ENCODE measurements at regions of chr11 and their contacts with region 1.

Region 1: GRCh38 chr11:6603287-6604080 is at the starts of genes ILK and RRP8:
- DNase-seq: peak; percentile 60
- H3K4me3 ChIP-seq: peak within 1 kb of the TSS; percentile 81 to 92 (median 86)
- H3K27ac ChIP-seq: peak within 1 kb of the TSS; percentile 90 to 99 (median 96)
- H3K4me1 ChIP-seq: peaks cover 22 to 76% (median 55%) of the 10 kb centered on the region in 3 donors
- H3K27me3 ChIP-seq: no peaks in the 10 kb centered on the region
- CTCF ChIP-seq: peak in 4 of 6 experiments; percentile 8 to 65 (median 20)
- POLR2A ChIP-seq: peak in 2 of 4 donors; percentile 78 to 82
- total RNA-seq, gene ILK: 34.5 to 128 (median 49.5) TPM
- total RNA-seq, gene RRP8: 10.9 to 23.5 (median 15.7) TPM

Region 2: GRCh38 chr11:6438979-6439571 is 164.4 kb before region 1 on chr11:
- intact Hi-C with region 1: no loop called
- DNase-seq: no peak
- H3K4me3 ChIP-seq: no peak overlapping the region
- H3K27ac ChIP-seq: no peak overlapping the region
- H3K4me1 ChIP-seq: peaks cover 0 to 3% (median 0%) of the 10 kb centered on the region in 3 donors
- H3K27me3 ChIP-seq: no peaks in the 10 kb centered on the region
- CTCF ChIP-seq: peak; percentile 17 to 73 (median 56)
- POLR2A ChIP-seq: no peak

Region 3: DNA sequence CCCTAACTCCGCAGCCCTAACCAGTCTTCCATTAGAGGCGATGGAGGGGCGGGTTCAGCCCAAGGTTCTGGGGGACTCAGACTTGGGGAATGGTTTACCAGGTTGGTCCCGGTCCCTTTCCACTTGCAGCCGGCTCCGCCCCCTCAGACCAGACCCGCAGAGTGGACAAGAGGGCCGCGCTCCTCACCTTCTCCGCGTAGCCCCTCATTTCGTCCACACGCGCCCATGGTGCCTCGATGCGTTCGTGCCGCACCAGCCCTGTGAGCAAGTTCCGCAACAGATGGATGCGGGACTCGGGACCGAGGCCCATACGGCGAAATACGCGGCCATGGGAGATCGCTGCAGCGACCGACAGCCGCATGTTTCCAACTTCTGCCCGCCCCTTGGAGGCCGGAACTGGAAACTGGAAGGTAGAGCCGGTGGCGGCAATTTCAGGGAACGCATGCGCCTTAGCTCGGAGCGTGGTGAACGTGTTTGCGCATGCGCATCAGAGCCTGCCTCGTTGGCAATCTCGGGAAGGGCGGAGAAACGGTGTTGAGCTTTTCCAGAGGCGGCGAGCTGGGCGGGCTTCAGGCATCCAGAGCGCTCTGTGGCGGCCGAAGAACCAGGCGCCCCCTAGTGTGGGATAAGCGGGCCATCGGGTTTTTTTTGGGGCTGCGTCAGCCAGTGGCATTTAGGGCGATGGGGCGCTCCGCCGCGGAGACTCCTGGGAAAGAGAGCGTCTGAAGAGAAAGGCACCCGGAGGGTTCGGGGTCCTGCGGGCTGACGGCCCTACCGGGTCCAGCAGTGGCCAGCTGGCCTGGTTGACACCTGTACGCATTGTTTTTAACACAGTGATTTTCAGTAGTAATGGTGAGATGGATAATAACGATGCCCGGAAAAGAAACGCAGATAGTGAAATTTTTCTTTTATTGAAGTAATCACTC is 79.7 kb after region 1 on chr11 and contains the start of gene MRPL17:
- intact Hi-C with region 1: loop called (anchors 5 kb)
- DNase-seq: peak; percentile 91
- H3K4me3 ChIP-seq: peak within 1 kb of the TSS; percentile 79 to 90 (median 86)
- H3K27ac ChIP-seq: peak within 1 kb of the TSS; percentile 82 to 97 (median 92)
- H3K4me1 ChIP-seq: peaks cover 5 to 27% (median 12%) of the 10 kb centered on the region in 3 donors
- H3K27me3 ChIP-seq: no peaks in the 10 kb centered on the region
- CTCF ChIP-seq: peak; percentile 84 to 98 (median 94)
- POLR2A ChIP-seq: peak in 3 of 4 donors; percentile 58 to 87 (median 80)
- total RNA-seq, gene MRPL17: 18.9 to 31.8 (median 26.1) TPM

Region 4: DNA sequence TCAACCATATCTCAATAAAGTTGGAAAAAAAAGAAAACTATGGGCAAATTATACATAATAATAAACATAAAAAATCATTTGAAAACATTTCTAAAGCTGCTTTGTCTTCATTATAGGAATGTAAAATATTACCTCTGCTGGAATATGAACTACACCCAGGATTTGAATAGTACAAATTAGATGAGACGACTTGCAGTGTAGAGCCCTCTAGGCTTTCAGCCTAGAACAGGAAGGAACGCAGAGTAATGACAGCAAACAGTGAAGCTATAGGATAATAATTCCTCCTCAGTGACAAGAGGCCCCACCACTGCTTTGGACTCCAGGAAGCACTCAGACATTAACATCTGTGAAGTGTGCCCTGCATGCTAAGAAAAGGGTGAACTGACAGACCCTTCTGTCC is 187.1 kb after region 1 on chr11:
- intact Hi-C with region 1: no loop called
- DNase-seq: no peak
- H3K4me3 ChIP-seq: no peak overlapping the region
- H3K27ac ChIP-seq: no peak overlapping the region
- H3K4me1 ChIP-seq: no peaks in the 10 kb centered on the region
- H3K27me3 ChIP-seq: no peaks in the 10 kb centered on the region
- CTCF ChIP-seq: no peak
- POLR2A ChIP-seq: no peak